Calu3 (cell line): ENCODE measurements at regions of chr12 and their contacts with region 1.

Region 1: GRCh38 chr12:27014085-27014858 is at the start of gene TM7SF3:
- DNase-seq: peak; percentile 97
- H3K4me3 Mint-ChIP-seq: peak within 1 kb of the TSS; percentile 86
- H3K27ac Mint-ChIP-seq: peak within 1 kb of the TSS; percentile 42
- H3K4me1 Mint-ChIP-seq: peaks cover 29% of the 10 kb centered on the region
- H3K27me3 Mint-ChIP-seq: no peaks in the 10 kb centered on the region
- CTCF ChIP-seq: peak; percentile 92
- total RNA-seq, gene TM7SF3: 62.1 and 70.0 TPM in 2 replicates

Region 2: DNA sequence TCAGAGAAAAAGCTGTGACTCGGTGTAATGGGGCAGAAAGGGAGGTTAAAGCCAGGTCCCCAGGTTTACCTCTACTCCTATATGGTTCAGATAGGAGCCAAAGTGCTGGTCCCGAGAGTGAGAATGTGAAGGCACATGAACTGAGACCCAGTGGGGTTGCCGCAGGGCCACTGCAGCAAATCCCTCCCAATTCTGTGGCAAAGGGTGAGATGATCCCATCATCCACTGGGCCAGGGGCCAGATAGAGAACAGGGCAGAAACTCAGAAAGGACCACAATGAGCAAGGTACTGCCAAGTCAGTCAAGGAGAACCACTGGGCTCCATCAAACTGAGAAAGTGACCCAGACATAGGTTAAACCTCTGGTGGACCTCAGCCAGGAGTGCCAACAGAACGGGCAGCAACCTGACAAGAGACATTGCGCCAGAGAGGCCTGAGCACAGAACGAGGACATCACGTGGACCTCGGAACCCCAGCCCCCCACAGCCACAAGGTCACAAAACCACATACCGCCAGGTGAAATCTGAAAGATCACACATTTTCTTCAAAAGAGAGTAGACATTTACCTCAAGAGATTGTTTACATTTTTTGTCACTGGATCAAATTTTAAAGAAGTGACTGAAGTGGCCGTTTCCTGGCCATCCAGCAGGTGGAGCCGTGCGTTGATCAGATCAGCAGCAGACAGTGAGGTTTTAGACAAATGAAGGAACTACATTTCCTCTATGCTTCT is 160.8 kb before region 1 on chr12:
- CTCF ChIA-PET with region 1: no interaction called
- intact Hi-C with region 1: loop called (anchors 5 kb)
- DNase-seq: peak; percentile 66
- H3K4me3 Mint-ChIP-seq: no peak overlapping the region
- H3K27ac Mint-ChIP-seq: no peak overlapping the region
- H3K4me1 Mint-ChIP-seq: no peaks in the 10 kb centered on the region
- H3K27me3 Mint-ChIP-seq: no peaks in the 10 kb centered on the region
- CTCF ChIP-seq: peak; percentile 75

Region 3: DNA sequence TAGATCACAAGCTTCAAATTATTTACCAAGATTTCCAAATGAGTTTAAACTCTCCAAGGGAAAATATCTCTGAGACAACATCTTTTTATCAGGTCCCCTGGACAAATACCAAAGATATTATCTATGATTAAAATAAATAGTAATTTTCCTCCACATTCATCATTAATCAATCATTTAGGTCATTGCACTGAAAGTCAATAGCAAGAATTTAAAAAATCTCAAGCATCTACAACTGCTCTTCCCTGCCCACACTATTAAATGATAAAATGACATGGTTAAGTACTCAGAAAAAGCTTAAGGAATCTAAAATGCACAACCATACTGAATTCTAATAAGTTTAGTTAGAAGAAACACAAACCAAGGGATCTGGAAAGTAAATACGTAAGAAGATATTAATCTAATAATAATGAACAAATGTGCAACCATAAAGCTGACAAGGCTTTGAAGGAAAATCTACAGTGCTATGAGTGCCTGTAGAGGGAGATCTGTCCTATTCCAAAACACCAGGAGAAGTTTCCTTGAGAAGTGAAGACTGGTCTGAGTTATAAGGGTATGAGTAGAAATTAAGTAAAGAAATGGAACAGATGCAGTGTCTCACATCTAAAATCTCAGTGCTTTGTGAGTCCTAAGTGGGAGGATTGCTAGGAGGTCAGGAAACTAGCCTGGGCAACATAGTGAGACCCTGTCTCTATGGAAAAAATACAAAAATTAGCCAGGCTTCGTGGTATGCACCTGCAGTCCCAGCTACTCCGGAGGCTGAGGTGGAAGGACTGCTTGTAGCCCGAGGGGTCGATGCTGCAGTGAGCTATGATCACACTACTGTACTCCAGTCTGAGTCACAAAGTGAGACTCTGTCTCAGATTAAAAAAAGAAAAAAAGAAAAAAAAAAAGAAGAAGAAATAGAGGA is 95.7 kb before region 1 on chr12:
- CTCF ChIA-PET with region 1: no interaction called
- intact Hi-C with region 1: no loop called
- DNase-seq: no peak
- H3K4me3 Mint-ChIP-seq: no peak overlapping the region
- H3K27ac Mint-ChIP-seq: no peak overlapping the region
- H3K4me1 Mint-ChIP-seq: peaks cover 8% of the 10 kb centered on the region
- H3K27me3 Mint-ChIP-seq: no peaks in the 10 kb centered on the region
- CTCF ChIP-seq: no peak

Region 4: GRCh38 chr12:26937875-26938700 is 76.2 kb before region 1 on chr12 and contains the starts of genes FGFR1OP2 and INTS13:
- CTCF ChIA-PET with region 1: no interaction called
- intact Hi-C with region 1: loop called (anchors 5 kb)
- DNase-seq: peak; percentile 98
- H3K4me3 Mint-ChIP-seq: peak within 1 kb of the TSS; percentile 94
- H3K27ac Mint-ChIP-seq: peak within 1 kb of the TSS; percentile 95
- H3K4me1 Mint-ChIP-seq: peaks cover 24% of the 10 kb centered on the region
- H3K27me3 Mint-ChIP-seq: no peaks in the 10 kb centered on the region
- CTCF ChIP-seq: no peak
- total RNA-seq, gene FGFR1OP2: 33.7 and 37.5 TPM in 2 replicates
- total RNA-seq, gene INTS13: 35.0 and 36.3 TPM in 2 replicates

Region 5: DNA sequence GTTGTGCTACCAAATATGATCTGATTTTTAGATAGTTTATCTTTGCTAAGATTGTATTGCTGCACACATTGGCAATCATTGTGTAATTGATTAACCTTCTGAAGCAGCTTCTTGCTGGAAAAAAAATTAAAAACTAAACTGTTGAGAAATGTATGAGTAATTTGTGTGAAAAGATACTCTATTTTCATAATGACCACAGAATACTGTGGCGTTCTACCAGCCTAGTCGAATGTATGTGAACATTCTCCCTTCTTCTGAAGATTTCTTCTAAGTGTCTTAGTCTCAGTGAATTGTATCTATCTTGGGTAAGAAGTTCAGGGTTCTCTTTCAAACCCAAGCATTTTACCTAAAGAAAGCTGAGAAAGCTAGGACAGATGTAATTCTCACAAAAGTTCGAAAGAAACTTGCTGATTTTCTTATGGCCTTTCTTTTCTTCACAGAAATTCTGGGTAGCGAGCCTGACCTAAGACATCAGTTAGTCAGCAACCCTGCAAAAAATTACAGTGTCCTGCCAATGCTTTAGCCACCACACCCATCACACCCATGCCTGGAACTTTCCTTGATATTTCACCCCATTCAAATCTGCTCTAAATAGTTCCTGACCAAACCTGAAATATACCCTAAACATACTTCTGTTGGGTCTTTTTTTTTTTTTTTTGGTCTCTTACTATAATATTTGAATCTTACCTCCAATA is 95.2 kb after region 1 on chr12:
- CTCF ChIA-PET with region 1: no interaction called
- intact Hi-C with region 1: loop called (anchors 2 kb)
- DNase-seq: no peak
- H3K4me3 Mint-ChIP-seq: no peak overlapping the region
- H3K27ac Mint-ChIP-seq: no peak overlapping the region
- H3K4me1 Mint-ChIP-seq: peaks cover 23% of the 10 kb centered on the region
- H3K27me3 Mint-ChIP-seq: no peaks in the 10 kb centered on the region
- CTCF ChIP-seq: no peak

Region 6: GRCh38 chr12:27142101-27142721 is 127.9 kb after region 1 on chr12:
- CTCF ChIA-PET with region 1: interaction called, 4 read pairs
- intact Hi-C with region 1: loop called (anchors 2 kb)
- DNase-seq: peak; percentile 74
- H3K4me3 Mint-ChIP-seq: no peak overlapping the region
- H3K27ac Mint-ChIP-seq: no peak overlapping the region
- H3K4me1 Mint-ChIP-seq: peaks cover 8% of the 10 kb centered on the region
- H3K27me3 Mint-ChIP-seq: no peaks in the 10 kb centered on the region
- CTCF ChIP-seq: peak; percentile 81

Region 7: GRCh38 chr12:27243804-27244683 is 229.8 kb after region 1 on chr12 and contains the start of gene STK38L:
- CTCF ChIA-PET with region 1: interaction called, 10 read pairs
- intact Hi-C with region 1: no loop called
- DNase-seq: peak; percentile 99
- H3K4me3 Mint-ChIP-seq: peak within 1 kb of the TSS; percentile 95
- H3K27ac Mint-ChIP-seq: peak within 1 kb of the TSS; percentile 84
- H3K4me1 Mint-ChIP-seq: peaks cover 16% of the 10 kb centered on the region
- H3K27me3 Mint-ChIP-seq: no peaks in the 10 kb centered on the region
- CTCF ChIP-seq: no peak
- total RNA-seq, gene STK38L: 24.6 and 30.3 TPM in 2 replicates

Region 8: DNA sequence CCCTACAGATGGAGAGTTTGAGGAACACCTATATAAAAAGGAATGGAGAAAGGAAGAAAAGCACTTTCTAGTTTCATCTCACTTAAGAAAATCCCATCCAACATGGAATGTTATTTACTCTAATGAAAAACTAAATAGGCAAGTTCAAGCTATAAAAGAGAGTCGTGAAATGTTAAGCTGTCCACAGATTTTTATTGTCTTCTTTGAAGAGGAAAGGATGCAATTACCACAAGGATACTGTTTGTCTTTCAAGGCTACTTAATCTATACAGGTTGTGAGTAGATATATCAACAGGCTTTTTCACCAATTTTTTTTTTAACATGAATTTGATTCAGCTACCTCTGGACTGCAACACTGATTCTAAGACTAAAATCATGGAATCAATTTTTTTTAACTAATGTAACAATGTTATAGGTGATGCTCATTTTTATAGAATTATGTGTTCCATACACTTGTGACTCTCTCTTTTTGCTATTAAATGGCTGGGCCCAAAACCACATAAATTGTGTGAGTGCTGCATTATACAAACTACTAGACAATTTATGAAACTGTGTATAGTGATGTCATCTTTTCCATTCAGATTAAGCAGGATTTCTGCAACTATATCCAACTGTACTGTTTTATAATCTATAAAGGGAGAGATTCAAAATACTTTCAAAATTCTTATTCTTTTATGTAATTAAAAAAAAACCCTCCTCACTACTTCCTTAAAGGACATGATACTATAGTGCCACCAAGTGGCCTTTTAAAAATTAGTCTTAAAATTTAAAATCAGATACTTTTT is 291.6 kb after region 1 on chr12:
- CTCF ChIA-PET with region 1: interaction called, 29 read pairs
- intact Hi-C with region 1: loop called (anchors 2 kb)
- DNase-seq: no peak
- H3K4me3 Mint-ChIP-seq: no peak overlapping the region
- H3K27ac Mint-ChIP-seq: no peak overlapping the region
- H3K4me1 Mint-ChIP-seq: peaks cover 9% of the 10 kb centered on the region
- H3K27me3 Mint-ChIP-seq: no peaks in the 10 kb centered on the region
- CTCF ChIP-seq: peak; percentile 35